ENCODE measurements at regions of chr12 and their contacts with region 1.

Region 1: GRCh38 chr12:103626498-103626897 is 39.4 kb downstream of the STAB2 start:
- DNase-seq: peak; percentile 77
- H3K4me3 ChIP-seq: no peak overlapping the region
- H3K27ac ChIP-seq: no peak overlapping the region
- H3K4me1 ChIP-seq: peaks cover 3% of the 10 kb centered on the region
- H3K27me3 ChIP-seq: no peaks in the 10 kb centered on the region
- CTCF ChIP-seq: peak in 2 of 3 experiments; percentile 15 to 24
- POLR2A ChIP-seq: no peak

Region 2: DNA sequence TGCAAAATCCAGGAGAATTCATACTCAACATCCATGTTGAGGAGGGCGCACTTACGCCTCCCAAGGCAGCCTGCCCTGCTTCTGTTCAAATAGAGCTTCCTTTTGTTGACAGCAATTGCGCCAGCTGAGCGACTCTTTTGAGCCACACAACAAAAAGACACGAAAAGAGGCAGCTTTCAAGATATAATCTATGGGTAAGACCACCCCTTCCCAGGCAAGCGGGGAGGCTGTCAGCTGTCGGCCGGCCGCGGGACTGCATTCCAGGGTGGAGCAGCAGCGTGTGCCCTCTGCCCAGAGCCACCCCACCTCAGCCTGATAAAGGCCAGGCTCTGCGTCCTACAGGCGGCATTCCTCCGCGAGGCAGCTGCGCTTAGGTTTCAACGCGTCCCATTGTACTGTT is 55.2 kb before region 1 on chr12:
- intact Hi-C with region 1: no loop called
- DNase-seq: peak; percentile 34
- H3K4me3 ChIP-seq: peak overlapping the region in 1 of 2 donors; percentile 24
- H3K27ac ChIP-seq: no peak overlapping the region
- H3K4me1 ChIP-seq: no peaks in the 10 kb centered on the region
- H3K27me3 ChIP-seq: no peaks in the 10 kb centered on the region
- CTCF ChIP-seq: no peak
- POLR2A ChIP-seq: no peak

Region 3: GRCh38 chr12:104108755-104109445 is 482.4 kb after region 1 on chr12:
- intact Hi-C with region 1: loop called (anchors 10 kb)
- DNase-seq: peak; percentile 85
- H3K4me3 ChIP-seq: no peak overlapping the region
- H3K27ac ChIP-seq: no peak overlapping the region
- H3K4me1 ChIP-seq: no peaks in the 10 kb centered on the region
- H3K27me3 ChIP-seq: no peaks in the 10 kb centered on the region
- CTCF ChIP-seq: peak; percentile 49 to 87 (median 72)
- POLR2A ChIP-seq: no peak